PC-3 (cell line): ENCODE measurements at regions of chr12 and their contacts with region 1.

Region 1: DNA sequence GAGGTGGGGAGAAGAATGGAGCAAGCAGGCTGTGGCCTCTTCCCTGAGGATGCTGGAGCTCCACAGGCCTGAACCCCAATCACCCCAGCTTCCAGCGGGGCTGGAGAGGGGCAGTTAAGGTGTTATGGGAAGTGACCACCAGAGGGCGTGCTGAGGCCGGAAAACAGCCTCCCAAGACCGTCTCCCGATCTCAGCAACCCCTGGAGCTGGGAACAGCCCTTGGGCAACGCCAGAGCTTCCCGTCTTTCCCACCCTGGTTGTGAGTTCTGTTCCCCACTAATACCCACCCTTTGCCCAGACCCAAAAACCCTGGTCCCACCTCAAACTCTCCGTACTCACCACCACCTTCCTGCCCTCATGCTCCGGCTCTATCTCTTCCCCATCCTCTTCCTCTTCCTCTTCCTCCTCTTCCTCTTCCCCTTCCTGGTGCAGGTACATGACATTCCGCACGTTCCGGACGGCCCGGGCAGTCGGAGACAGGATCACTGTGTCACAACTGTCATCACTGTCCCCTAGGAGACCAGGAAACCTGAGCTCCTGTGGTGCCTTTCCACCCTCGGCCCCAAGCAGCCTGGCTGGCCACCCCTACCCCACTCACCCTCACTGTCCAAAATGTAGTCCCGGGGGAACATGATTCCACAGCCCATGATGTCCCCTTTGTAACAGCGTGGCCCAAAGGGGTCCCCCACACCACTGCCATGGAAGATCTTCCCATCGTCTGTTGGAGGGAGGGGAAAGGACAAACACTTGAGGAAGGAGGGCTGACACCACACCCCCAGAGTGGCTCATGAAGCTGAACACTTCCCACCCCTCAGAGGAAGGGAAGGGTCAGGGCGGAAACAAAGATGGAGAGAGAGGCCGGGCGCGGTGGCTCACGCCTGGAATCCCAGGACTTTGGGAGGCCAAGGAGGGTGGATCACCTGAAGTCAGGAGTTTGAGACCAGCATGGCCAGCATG is 12.9 kb downstream of the SPRYD3 start:
- DNase-seq: peak; percentile 81
- ATAC-seq: peak; percentile 53
- H3K4me3 ChIP-seq: no peak overlapping the region
- H3K27ac ChIP-seq: no peak overlapping the region
- H3K4me1 ChIP-seq: peaks cover 26% of the 10 kb centered on the region
- H3K27me3 ChIP-seq: no peaks in the 10 kb centered on the region
- CTCF ChIP-seq: peak; percentile 89

Region 2: DNA sequence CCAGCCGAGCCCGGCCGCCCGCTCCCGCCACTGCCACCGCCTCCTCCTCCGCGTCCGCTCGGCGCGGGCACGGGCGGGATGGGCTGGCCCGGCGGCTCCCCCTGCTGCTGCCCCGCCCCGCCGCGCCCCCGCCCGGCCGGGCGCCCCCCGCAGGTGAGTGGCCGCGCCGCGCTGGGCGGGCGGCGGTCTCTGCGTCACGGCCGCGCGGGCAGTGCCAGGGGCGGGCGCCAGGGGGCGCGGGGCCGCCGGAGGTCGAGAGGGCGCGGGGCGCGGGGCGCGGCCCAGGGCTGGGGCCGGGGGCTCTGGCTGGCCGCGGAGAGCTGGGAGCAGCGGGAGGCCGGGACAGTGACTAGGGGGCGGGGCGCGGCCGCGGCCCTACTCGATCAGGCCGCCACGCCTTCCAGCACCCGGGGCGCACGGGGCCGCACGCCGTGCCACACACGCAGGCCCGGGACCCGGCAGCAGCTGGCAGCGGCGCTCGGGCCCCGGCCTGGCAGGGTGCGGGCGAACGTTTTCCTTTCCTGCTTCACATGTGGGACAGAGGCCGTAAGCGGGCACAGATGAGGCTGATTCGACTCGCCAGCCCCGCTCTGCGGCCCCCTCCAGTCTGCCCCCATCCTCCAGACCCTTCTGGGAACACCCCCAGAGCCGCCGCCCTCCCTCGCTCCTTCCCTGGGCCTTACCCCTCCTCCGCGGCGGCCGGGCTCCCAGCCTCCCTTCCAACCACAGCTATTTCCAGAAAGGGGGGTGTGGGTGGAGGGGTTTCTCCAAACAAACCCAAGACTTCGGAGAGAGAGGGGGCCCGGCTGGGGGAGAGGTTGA is 18.8 kb before region 1 on chr12:
- CTCF ChIA-PET with region 1: interaction called, 13 read pairs
- POLR2A ChIA-PET with region 1: no interaction called
- intact Hi-C with region 1: no loop called
- DNase-seq: peak; percentile 73
- ATAC-seq: peak; percentile 38
- H3K4me3 ChIP-seq: peak overlapping the region; percentile 71
- H3K27ac ChIP-seq: peak overlapping the region; percentile 55
- H3K4me1 ChIP-seq: peaks cover 60% of the 10 kb centered on the region
- H3K27me3 ChIP-seq: no peaks in the 10 kb centered on the region
- CTCF ChIP-seq: no peak

Region 3: DNA sequence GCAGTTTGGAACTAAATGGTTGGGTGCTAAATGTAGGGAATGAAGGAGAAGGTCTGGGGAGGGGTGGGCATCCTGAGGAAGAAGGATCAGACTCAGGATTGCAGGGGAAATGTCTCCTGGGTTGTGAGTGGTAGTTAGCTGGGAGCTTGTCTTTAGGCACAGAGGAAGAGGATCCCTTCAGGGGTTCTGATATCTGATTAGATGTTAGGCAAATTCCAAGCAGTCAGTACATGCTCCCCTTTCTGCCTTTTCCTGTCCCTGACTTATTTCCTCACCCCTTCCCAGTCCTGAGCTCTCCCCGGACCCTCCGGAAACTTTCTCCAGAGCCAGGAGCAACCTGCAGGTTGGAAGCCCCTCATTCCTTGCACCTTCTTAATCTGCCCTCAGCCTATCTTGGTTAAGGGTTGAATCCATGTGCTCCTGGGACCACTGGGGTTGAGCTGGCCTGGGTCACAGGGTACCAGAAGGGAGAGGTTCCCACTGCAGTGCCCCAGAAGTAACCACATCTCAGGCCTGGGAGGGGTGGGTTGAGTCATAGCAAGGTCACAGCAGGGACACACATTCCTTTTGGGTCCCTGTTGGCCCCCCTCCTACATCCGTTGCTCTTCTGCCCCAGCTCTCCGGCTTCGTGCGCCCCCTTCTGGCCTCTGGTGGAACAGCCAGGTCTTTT is 32.9 kb after region 1 on chr12:
- CTCF ChIA-PET with region 1: interaction called, 37 read pairs
- POLR2A ChIA-PET with region 1: interaction called, 4 read pairs
- intact Hi-C with region 1: loop called (anchors 1 kb)
- DNase-seq: peak; percentile 95
- ATAC-seq: peak; percentile 56
- H3K4me3 ChIP-seq: peak overlapping the region; percentile 96
- H3K27ac ChIP-seq: peak overlapping the region; percentile 83
- H3K4me1 ChIP-seq: peaks cover 39% of the 10 kb centered on the region
- H3K27me3 ChIP-seq: no peaks in the 10 kb centered on the region
- CTCF ChIP-seq: peak; percentile 87

Region 4: GRCh38 chr12:53174881-53175491 is 108.7 kb after region 1 on chr12:
- CTCF ChIA-PET with region 1: interaction called, 3 read pairs
- POLR2A ChIA-PET with region 1: no interaction called
- intact Hi-C with region 1: loop called (anchors 10 kb)
- DNase-seq: peak; percentile 67
- ATAC-seq: peak; percentile 63
- H3K4me3 ChIP-seq: no peak overlapping the region
- H3K27ac ChIP-seq: no peak overlapping the region
- H3K4me1 ChIP-seq: peaks cover 51% of the 10 kb centered on the region
- H3K27me3 ChIP-seq: no peaks in the 10 kb centered on the region
- CTCF ChIP-seq: peak; percentile 58